Activated CD4-positive, alpha-beta memory T cell treated with anti-CD3 and anti-CD28 coated beads, Interleukin-2, amount 10 ng/mL, durations not matched to agents 7 days and 5 days (primary cell): ENCODE measurements at regions of chr2 and their contacts with region 1.

Region 1: GRCh38 chr2:72973566-72974435 is 56.5 kb downstream of the EMX1 start:
- DNase-seq: peak; percentile 54
- H3K4me3 Mint-ChIP-seq: no peak overlapping the region
- H3K27ac Mint-ChIP-seq: no peak overlapping the region
- H3K4me1 Mint-ChIP-seq: no peaks in the 10 kb centered on the region
- H3K27me3 Mint-ChIP-seq: peaks cover 22% of the 10 kb centered on the region

Region 2: GRCh38 chr2:72924353-72925240 is 49.2 kb before region 1 on chr2:
- CTCF ChIA-PET with region 1: interaction called, 12 read pairs
- POLR2A ChIA-PET with region 1: no interaction called
- DNase-seq: no peak
- H3K4me3 Mint-ChIP-seq: no peak overlapping the region
- H3K27ac Mint-ChIP-seq: no peak overlapping the region
- H3K4me1 Mint-ChIP-seq: peaks cover 11% of the 10 kb centered on the region
- H3K27me3 Mint-ChIP-seq: peaks cover 54% of the 10 kb centered on the region

Region 3: DNA sequence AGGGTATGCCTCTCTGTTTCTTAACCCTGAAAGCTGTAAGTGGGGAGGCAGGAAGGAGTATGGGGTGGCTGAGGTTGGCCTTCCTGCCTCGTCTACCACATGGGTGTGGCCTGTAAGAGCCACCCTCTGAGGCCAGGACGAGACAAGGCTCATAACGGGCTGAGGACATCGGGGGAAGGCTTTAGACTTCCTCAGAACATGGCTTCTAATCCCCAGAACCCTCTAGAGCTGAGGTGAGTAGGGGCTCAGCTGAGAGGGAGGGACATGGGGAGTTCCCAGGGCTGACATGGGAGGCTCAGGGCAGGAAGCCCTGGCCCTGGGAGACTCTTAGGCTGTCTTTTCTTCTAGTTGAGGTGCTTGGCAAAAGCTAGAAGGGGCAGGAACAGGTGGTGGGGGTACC is 19.8 kb before region 1 on chr2:
- CTCF ChIA-PET with region 1: interaction called, 15 read pairs
- POLR2A ChIA-PET with region 1: no interaction called
- DNase-seq: peak; percentile 81
- H3K4me3 Mint-ChIP-seq: peak overlapping the region; percentile 87
- H3K27ac Mint-ChIP-seq: peak overlapping the region; percentile 88
- H3K4me1 Mint-ChIP-seq: peaks cover 44% of the 10 kb centered on the region
- H3K27me3 Mint-ChIP-seq: no peaks in the 10 kb centered on the region